ENCODE measurements at regions of chr9 and their contacts with region 1.

Region 1: DNA sequence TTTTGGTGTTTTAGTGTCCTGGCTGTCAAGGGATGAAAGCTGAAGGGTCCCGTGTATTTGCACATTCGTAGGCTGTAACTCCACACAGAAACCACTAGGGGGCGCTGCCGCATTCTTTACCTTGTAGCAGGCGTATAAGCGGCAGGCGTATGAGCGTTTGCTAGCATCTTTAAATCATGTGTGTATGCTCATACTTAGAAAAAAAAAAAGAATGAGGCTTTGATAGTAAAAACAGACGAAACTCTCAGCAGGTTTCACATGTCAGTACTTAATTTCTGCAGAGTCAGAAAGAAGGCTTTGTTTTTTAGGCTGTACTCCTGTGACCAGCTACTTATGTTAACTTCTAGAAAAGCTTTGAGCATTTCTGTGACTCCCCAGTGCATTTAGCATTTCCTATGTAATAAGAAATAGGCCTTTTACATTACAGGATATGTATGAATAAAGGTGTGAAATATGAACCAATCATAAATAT is 218.8 kb upstream of the ADAMTSL1 start:
- DNase-seq: peak; percentile 87
- ATAC-seq: peak; percentile 97
- H3K4me3 ChIP-seq: no peak overlapping the region
- H3K27ac ChIP-seq: no peak overlapping the region
- H3K4me1 ChIP-seq: no peaks in the 10 kb centered on the region
- H3K27me3 ChIP-seq: no peaks in the 10 kb centered on the region
- CTCF ChIP-seq: peak; percentile 93
- POLR2A ChIP-seq: peak; percentile 55; the same call in 1 of the 2 replicates
- RAD21 ChIP-seq: peak; percentile 97

Region 2: GRCh38 chr9:18490635-18491370 is 235.6 kb after region 1 on chr9:
- CTCF ChIA-PET with region 1: no interaction called
- POLR2A ChIA-PET with region 1: no interaction called
- dilution Hi-C with region 1: no loop called
- in situ Hi-C with region 1: no loop called
- intact Hi-C with region 1: no loop called
- DNase-seq: peak; percentile 99
- ATAC-seq: peak; percentile 78
- H3K4me3 ChIP-seq: peak overlapping the region; percentile 13
- H3K27ac ChIP-seq: peak overlapping the region; percentile 77
- H3K4me1 ChIP-seq: peaks cover 5% of the 10 kb centered on the region
- H3K27me3 ChIP-seq: no peaks in the 10 kb centered on the region
- CTCF ChIP-seq: no peak
- POLR2A ChIP-seq: peak; percentile 77
- RAD21 ChIP-seq: peak; percentile 35

Region 3: DNA sequence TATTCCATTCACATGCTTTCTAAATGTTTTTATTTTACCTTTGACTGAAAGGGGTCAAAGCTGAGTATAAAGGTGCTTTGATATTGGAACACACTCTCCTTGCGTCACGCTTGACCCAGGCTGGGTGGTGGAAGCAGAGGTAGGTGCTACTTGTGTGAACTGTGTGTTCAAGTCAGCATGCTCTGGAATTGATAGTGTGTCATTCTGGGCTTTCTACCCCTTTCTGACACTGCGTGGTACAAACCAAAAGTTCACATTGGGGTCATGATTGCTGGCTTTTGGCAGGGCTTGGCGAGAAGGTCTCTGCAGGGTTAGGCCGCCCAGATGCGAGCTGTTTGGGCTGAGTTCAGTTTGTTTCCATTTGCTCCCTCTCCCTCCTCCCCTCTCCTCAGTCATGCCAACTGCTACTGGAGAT is 350.6 kb after region 1 on chr9:
- CTCF ChIA-PET with region 1: no interaction called
- POLR2A ChIA-PET with region 1: no interaction called
- dilution Hi-C with region 1: no loop called
- in situ Hi-C with region 1: no loop called
- intact Hi-C with region 1: loop called (anchors 10 kb)
- DNase-seq: peak; percentile 19
- ATAC-seq: peak; percentile 64
- H3K4me3 ChIP-seq: no peak overlapping the region
- H3K27ac ChIP-seq: no peak overlapping the region
- H3K4me1 ChIP-seq: peaks cover 4% of the 10 kb centered on the region; the same call in 1 of the 2 replicates
- H3K27me3 ChIP-seq: no peaks in the 10 kb centered on the region
- CTCF ChIP-seq: no peak
- POLR2A ChIP-seq: no peak
- RAD21 ChIP-seq: no peak

Region 4: GRCh38 chr9:18824095-18824666 is 569.0 kb after region 1 on chr9:
- CTCF ChIA-PET with region 1: interaction called, 3 read pairs
- POLR2A ChIA-PET with region 1: no interaction called
- dilution Hi-C with region 1: no loop called
- in situ Hi-C with region 1: no loop called
- intact Hi-C with region 1: loop called (anchors 10 kb)
- DNase-seq: no peak
- ATAC-seq: no peak
- H3K4me3 ChIP-seq: no peak overlapping the region
- H3K27ac ChIP-seq: no peak overlapping the region
- H3K4me1 ChIP-seq: peaks cover 5% of the 10 kb centered on the region
- H3K27me3 ChIP-seq: no peaks in the 10 kb centered on the region
- CTCF ChIP-seq: peak; percentile 28; the same call in 1 of the 2 replicates
- POLR2A ChIP-seq: no peak
- RAD21 ChIP-seq: peak; percentile 36; the same call in 1 of the 2 replicates

Region 5: DNA sequence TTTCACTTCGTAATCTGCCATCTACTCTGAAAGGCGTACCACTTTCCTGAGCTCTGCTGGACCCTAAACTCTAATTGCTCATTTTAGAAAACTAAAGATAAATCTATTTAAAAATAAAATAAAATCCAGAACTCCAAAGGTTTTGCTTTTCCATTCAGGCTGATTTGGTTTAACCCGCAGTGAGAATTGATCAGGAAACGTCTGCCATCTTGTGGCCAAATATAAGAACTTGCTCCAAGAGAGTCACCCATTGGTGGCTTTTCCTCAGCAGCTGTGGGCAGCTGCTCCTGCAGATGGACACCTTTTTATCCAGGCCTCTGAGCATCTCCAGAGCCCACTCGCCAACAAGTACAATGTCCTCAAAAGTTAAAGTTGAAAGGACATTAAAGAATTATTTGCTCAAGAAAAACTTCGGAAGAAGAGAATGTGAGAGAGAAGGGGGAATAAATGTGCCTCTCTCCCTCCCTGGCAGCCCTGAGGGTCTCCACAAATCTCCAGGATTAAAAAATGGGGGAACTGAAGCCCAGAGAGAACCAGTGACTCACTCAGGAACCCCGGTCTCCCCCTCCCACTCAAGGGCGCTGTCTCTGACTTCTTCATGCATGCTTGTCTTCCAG is 773.7 kb after region 1 on chr9:
- CTCF ChIA-PET with region 1: interaction called, 21 read pairs
- POLR2A ChIA-PET with region 1: no interaction called
- dilution Hi-C with region 1: no loop called
- in situ Hi-C with region 1: loop called (anchors 5 kb)
- intact Hi-C with region 1: loop called (anchors 1 kb)
- DNase-seq: peak; percentile 75
- ATAC-seq: peak; percentile 95
- H3K4me3 ChIP-seq: no peak overlapping the region
- H3K27ac ChIP-seq: no peak overlapping the region
- H3K4me1 ChIP-seq: no peaks in the 10 kb centered on the region
- H3K27me3 ChIP-seq: no peaks in the 10 kb centered on the region; the same call in 1 of the 2 replicates
- CTCF ChIP-seq: peak; percentile 83
- POLR2A ChIP-seq: no peak
- RAD21 ChIP-seq: peak; percentile 86